Breast epithelium (tissue), 4 donors: ENCODE measurements at regions of chr3 and their contacts with region 1.

Region 1: GRCh38 chr3:32285891-32286290 is 47.4 kb downstream of the CMTM8 start:
- DNase-seq: no peak
- H3K4me3 ChIP-seq: no peak overlapping the region
- H3K27ac ChIP-seq: no peak overlapping the region
- H3K4me1 ChIP-seq: no peaks in the 10 kb centered on the region
- H3K27me3 ChIP-seq: no peaks in the 10 kb centered on the region
- CTCF ChIP-seq: no peak
- POLR2A ChIP-seq: no peak

Region 2: GRCh38 chr3:32004113-32004765 is 281.7 kb before region 1 on chr3:
- intact Hi-C with region 1: no loop called
- DNase-seq: no peak
- H3K4me3 ChIP-seq: no peak overlapping the region
- H3K27ac ChIP-seq: no peak overlapping the region
- H3K4me1 ChIP-seq: no peaks in the 10 kb centered on the region
- H3K27me3 ChIP-seq: no peaks in the 10 kb centered on the region
- CTCF ChIP-seq: no peak
- POLR2A ChIP-seq: no peak

Region 3: DNA sequence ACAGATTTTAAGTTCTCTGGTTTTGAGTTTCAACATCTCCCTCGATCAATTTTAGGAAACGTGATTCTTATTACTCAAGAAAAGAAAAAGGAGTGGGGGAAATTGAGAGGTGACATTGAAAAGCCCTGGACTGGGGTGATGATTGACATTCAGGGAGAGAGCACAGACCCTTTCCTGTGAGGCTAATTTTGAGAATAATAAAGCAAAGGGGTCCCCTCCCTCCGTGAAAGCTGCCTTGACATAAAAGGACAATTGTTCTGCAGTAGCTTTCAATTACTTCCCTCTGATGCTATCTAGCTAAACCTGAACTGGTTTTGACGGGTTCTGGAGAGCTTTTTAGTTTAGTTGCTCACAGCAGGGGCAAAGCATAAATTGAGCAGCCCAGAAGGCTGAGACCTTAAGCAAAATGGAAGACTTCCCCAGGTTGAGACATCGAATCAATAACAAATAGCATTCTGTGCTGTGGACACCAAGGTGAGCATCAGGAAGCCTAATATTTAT is 61.8 kb before region 1 on chr3:
- intact Hi-C with region 1: loop called (anchors 2 kb)
- DNase-seq: no peak
- H3K4me3 ChIP-seq: no peak overlapping the region
- H3K27ac ChIP-seq: peak overlapping the region in 1 of 2 donors; percentile 48
- H3K4me1 ChIP-seq: no peaks in the 10 kb centered on the region
- H3K27me3 ChIP-seq: no peaks in the 10 kb centered on the region
- CTCF ChIP-seq: no peak
- POLR2A ChIP-seq: no peak

Region 4: GRCh38 chr3:32570421-32571191 is 284.7 kb after region 1 on chr3 and contains the start of gene DYNC1LI1:
- intact Hi-C with region 1: loop called (anchors 5 kb)
- DNase-seq: peak; percentile 90 to 91
- H3K4me3 ChIP-seq: peak within 1 kb of the TSS; percentile 84 to 97 (median 87)
- H3K27ac ChIP-seq: peak within 1 kb of the TSS; percentile 89 to 99
- H3K4me1 ChIP-seq: peaks cover 0 to 7% of the 10 kb centered on the region in 2 donors
- H3K27me3 ChIP-seq: no peaks in the 10 kb centered on the region
- CTCF ChIP-seq: no peak
- POLR2A ChIP-seq: no peak
- total RNA-seq, gene DYNC1LI1: 25.3 to 35.7 (median 31.8) TPM

Region 5: GRCh38 chr3:33096093-33096868 is 810.4 kb after region 1 on chr3:
- intact Hi-C with region 1: no loop called
- DNase-seq: peak in 1 of 2 donors; percentile 24
- H3K4me3 ChIP-seq: peak overlapping the region; percentile 69 to 93 (median 84)
- H3K27ac ChIP-seq: peak overlapping the region; percentile 88 to 97
- H3K4me1 ChIP-seq: peaks cover 0 to 3% of the 10 kb centered on the region in 2 donors
- H3K27me3 ChIP-seq: no peaks in the 10 kb centered on the region
- CTCF ChIP-seq: no peak
- POLR2A ChIP-seq: no peak